CD8-positive, alpha-beta memory T cell (primary cell): ENCODE measurements at regions of chr1 and their contacts with region 1.

Region 1: DNA sequence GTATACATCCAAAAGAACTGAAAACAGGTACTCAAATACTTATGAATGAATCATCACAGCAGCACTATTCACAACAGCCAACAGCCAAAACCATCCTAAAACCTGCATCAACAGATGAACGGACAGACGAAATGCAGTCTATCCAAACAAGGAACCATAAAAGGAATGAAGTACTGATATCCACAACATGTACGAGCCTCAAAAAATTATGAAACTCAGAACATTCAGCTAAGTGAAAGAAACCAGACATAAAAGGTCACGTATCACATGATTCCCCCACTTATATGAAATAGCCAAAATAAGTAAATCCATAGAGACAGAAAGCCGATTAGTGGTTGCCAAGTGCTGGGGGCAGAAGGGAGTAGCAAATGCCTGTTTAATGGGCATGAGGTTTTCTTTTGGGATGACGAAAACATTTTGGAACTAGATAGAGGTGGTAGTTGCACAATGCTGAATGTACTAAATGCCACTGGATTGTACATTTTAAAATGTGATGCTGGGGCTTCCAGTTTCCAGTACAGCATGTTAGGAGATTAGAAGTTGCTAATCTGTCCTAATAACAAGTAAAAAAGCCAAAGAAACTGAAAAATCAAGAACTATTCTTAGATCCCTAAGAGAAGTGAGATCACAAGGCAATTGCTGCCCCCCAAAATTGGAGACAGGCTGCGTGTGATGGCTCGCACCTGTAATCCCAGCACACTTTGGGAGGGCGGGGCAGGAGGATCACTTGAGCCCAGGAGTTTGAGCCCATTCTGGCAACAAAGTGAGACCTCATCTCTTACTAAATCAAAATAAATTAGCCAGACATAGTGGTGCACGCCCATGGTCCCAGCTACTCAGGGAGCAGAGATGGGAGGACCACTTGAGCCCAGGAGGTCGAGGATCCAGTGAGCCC is 25.3 kb downstream of the CLSTN1 start:
- DNase-seq: no peak
- H3K4me3 ChIP-seq: no peak overlapping the region
- H3K4me3 Mint-ChIP-seq: peak overlapping the region; percentile 17 to 68 (median 54)
- H3K27ac ChIP-seq: no peak overlapping the region
- H3K27ac Mint-ChIP-seq: peak overlapping the region; percentile 2 to 90 (median 80)
- H3K4me1 ChIP-seq: peaks cover 48% of the 10 kb centered on the region
- H3K4me1 Mint-ChIP-seq: peaks cover 52 to 78% (median 69%) of the 10 kb centered on the region in 3 donors
- H3K27me3 ChIP-seq: no peaks in the 10 kb centered on the region
- H3K27me3 Mint-ChIP-seq: no peaks in the 10 kb centered on the region

Region 2: GRCh38 chr1:9784508-9785133 is 13.9 kb before region 1 on chr1:
- CTCF ChIA-PET with region 1: interaction called, 14 read pairs
- POLR2A ChIA-PET with region 1: interaction called, 3 read pairs
- DNase-seq: peak; percentile 40 to 74 (median 63)
- H3K4me3 ChIP-seq: no peak overlapping the region
- H3K4me3 Mint-ChIP-seq: peak overlapping the region in 1 of 7 donors; percentile 49
- H3K27ac ChIP-seq: no peak overlapping the region
- H3K27ac Mint-ChIP-seq: peak overlapping the region in 3 of 8 donors; percentile 40 to 66 (median 63)
- H3K4me1 ChIP-seq: peaks cover 22% of the 10 kb centered on the region
- H3K4me1 Mint-ChIP-seq: peaks cover 21 to 54% (median 34%) of the 10 kb centered on the region in 3 donors
- H3K27me3 ChIP-seq: no peaks in the 10 kb centered on the region
- H3K27me3 Mint-ChIP-seq: no peaks in the 10 kb centered on the region